AG04450 (cell line): ENCODE measurements at regions of chr3 and their contacts with region 1.

Region 1: DNA sequence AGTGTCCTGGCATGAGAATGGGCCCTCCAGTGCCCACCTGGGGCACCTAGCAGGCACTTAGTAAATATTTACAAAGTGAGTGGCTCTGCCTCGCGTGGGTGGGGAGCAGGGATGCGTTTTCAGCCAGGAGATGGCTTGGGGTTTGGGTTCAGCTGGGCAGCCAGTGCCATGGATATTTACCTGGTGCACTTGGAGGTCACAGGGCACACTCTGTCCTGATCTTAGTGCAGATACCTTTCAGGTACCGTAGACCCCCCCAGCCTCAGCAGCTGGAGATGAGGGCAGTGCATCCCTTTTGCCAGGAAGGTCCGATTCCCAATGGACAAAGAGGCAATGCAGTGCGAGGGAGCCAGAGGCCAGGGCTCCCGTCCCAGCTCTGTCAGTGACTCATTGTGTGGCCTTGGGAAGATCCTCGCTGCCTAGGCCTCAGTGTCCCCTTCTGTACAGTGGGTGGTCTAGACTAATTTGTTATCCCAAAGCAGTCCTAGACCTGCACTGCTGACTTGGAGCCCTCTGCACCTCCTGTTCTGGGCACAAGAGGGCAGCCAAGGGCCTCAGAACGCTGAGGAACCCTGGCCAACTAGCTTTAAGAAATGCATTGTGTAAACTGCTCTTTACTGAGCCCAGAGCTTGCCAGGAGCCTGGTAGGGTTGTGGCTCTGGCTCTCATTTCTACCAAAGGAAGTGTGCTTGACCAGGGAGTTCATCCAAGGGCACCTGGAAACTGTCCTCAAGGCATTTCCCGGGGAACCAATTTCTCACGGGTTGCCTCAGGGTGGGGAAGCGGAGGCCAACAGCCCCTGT is 16.0 kb downstream of the HDAC11 start:
- DNase-seq: peak; percentile 69
- H3K4me3 ChIP-seq: no peak overlapping the region
- H3K27ac ChIP-seq: no peak overlapping the region
- H3K27me3 ChIP-seq: no peaks in the 10 kb centered on the region
- CTCF ChIP-seq: peak; percentile 99

Region 2: GRCh38 chr3:13452490-13453335 is 43.4 kb before region 1 on chr3:
- CTCF ChIA-PET with region 1: interaction called, 13 read pairs
- POLR2A ChIA-PET with region 1: no interaction called
- DNase-seq: peak; percentile 11
- H3K4me3 ChIP-seq: no peak overlapping the region
- H3K27ac ChIP-seq: no peak overlapping the region
- H3K27me3 ChIP-seq: no peaks in the 10 kb centered on the region
- CTCF ChIP-seq: peak; percentile 73

Region 3: DNA sequence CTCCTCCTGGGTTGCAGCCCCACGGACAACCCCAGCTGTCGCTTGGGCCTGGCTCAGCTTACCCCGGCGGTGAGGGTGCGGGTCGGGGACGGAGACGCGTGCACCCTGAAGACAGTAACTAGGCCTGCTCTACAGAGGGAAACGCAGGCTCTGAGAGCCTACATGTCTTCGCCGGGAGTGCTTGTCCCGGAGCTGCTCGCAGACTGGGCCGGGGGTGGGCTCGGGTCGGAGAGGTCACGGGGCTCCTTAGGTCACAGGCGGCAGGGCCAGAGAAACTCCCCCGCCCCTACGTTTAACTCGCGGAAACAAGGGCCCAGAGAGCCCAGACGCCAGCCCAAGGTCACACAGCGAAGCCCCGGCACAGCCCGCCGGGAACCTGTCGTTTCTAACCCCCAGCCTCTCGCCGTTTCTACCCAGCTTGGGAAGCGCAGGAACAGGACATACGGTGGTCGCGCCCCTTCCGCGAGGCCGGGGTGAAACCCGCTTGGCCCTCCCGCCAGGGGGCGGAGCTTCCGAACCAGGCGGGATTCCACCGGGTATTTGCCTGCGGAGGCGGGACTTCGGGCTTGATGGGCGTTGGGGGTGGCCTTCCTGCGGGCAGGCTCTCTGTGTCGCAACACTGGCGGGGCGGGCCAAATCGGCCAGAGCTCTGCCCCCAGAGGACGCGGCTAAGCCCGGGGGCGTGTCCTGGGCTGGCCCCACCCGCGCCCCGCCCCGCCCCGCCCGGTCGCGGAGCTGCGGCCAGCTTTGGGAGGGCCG is 16.4 kb before region 1 on chr3 and contains the start of gene HDAC11:
- CTCF ChIA-PET with region 1: interaction called, 58 read pairs
- POLR2A ChIA-PET with region 1: interaction called, 5 read pairs
- DNase-seq: peak; percentile 90
- H3K4me3 ChIP-seq: peak within 1 kb of the TSS; percentile 72
- H3K27ac ChIP-seq: peak within 1 kb of the TSS; percentile 21
- H3K27me3 ChIP-seq: peaks cover 6% of the 10 kb centered on the region
- CTCF ChIP-seq: no peak
- polyA plus RNA-seq, gene HDAC11: 7.1 and 7.5 TPM in 2 replicates

Region 4: DNA sequence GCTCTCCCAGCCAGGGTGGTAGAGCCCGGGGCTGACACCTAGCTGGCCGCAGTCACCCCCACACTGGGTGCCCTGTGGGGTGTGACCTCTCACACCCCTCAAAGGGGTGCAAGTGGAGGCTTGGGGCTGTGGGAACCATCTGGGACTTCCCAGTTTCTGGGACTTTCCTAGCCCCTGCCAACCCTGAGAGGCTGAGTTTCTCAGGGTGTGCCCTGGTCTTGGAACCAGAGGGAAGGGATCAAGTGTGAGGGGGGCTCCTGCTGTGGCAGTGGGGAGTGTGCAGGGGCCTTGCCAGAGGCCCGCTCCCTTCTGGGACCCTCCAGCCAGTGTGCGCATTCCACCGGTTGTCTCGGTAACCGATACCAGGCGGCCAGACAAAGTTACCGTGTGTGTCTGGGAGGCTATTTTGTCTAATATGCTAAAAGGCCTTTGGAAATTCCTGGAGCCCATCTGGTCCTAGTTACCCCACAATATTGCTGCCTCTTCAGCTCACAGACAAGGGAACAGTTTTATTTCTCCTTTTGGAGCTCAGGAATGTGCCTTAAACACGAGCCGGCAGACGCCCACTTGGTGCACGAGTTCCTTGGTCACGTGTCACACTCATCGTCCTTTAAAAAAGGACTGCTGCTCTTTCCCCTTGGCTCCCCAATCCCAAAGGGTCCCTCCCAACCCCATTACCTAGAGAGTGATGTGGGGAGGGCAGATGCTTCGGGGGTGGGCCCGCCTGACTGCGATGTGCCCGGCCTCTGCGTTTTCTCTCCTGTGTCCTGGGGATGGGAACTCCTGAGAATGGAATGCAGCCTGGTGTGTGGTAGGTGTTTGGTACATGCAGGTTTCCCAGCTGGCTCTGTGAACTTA is 17.2 kb after region 1 on chr3:
- CTCF ChIA-PET with region 1: interaction called, 23 read pairs
- POLR2A ChIA-PET with region 1: no interaction called
- DNase-seq: no peak
- H3K4me3 ChIP-seq: no peak overlapping the region
- H3K27ac ChIP-seq: peak overlapping the region; percentile 2
- H3K27me3 ChIP-seq: peaks cover 9% of the 10 kb centered on the region
- CTCF ChIP-seq: no peak

Region 5: DNA sequence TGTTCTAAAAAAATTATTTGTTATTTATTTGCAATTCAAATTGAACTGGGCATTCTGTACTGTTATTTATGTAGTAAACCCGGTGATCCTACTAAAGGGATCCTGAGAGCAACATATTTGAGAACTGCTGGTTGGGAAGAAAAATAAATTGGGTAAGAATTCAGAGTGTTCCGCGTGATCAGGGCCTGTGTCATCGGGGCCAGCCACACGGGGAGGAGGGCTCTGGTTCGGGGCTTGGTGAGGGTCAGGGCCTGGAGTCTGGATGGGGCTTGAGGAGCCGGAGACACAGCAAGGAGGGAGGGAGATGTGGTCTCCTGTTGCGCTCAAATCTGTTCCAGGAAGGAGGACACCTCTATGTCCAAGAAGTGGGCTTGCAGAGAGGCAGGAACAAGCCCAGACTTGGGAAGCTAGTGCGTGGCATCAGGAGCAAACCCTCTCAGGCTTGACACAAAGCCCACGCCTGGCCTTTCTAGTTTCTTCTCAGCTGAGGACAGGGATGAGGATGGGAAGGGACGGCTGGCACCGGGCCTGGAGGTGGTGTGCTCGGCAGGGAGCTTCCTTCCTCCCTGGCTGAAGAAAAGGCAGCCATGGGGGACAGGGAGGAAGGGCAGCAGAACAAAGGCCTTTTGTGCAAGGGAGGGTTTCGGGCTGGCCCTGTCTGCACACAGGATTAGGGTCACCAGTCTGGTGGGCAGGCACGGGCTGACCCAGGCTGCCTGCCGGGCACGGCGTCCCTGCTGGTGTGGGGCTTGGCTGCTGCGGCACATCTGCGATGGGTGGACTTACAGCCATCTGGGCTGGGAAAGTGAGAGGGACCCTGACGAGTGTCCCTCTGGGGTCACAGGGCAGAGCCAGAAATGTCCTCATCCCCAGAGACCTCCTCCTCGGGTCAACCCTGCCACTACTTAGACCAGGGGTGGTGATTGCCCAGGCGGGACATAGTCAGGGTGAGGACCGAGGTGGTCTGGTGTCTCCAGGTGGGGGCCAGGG is 30.0 kb after region 1 on chr3:
- CTCF ChIA-PET with region 1: interaction called, 12 read pairs
- POLR2A ChIA-PET with region 1: no interaction called
- DNase-seq: no peak
- H3K4me3 ChIP-seq: no peak overlapping the region
- H3K27ac ChIP-seq: no peak overlapping the region
- H3K27me3 ChIP-seq: no peaks in the 10 kb centered on the region
- CTCF ChIP-seq: no peak